ENCODE measurements at regions of chr3 and their contacts with region 1.

Region 1: DNA sequence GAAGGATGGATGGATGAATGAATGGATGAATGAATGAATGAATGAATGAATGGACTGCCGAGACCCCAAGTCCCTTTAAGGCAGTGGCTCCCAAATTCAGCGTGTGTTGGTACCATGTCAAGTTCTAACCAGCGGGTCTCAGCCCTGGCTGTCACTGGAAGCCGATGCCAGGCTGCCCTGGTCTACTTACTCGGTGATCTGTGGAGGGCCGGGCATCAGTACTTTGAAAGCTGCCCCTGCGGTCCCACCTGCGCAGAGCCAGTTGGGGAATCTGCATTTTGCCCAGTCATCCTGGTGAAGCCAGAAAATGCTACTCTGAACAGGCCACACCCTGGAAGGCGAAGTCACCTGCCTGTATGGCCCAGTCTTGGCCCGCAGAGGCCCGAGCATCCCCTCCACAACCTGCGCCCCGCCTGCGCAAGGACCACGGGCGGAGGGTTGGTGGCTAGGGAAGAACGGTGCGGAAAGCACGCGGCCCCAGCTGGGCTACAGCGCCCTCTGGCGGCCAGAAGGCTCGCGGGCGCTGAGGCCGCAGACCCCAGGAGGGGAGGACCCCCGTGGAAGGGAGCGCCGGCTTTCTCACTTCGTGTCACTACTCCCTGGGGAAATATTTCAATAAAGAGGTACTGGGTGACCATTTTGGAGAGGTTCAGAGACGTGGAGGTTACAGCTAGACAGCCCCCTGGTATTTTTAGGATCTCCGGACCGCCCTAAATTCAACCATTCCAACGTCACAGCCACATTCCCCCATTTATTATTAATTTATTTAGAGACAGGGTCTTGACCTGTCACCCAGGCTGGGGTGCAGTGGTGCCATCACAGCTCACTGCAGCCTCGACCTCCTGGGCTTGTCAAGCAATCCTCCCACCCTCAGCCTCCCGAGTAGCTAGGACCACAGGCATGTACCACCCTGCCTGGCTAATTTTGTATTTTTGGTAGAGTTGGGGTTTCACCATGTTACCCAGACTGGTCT is 34.9 kb downstream of the PRKCD start:
- DNase-seq: peak; percentile 50
- H3K4me3 Mint-ChIP-seq: no peak overlapping the region
- H3K27ac Mint-ChIP-seq: no peak overlapping the region
- H3K4me1 Mint-ChIP-seq: no peaks in the 10 kb centered on the region
- H3K27me3 Mint-ChIP-seq: no peaks in the 10 kb centered on the region
- CTCF ChIP-seq: peak; percentile 99

Region 2: DNA sequence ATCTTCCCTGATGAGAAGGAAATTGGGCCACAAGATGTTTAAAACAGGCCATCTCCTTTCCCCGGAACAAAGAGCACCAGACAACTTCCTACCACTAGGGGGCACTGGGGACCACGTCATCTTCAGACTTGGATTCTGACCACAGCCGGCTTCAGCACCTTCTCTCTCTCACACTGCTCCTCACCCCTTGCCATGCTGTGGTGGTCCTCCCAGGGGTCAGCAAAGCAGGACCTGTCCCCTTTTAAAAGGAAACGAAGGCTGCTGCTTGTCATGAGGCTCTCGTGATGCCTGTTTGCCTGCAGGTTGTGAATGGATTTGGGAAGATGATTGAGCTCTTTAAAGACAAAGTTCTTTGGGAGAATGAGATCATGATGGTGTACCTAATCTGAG is 81.9 kb before region 1 on chr3:
- CTCF ChIA-PET with region 1: interaction called, 134 read pairs
- POLR2A ChIA-PET with region 1: interaction called, 12 read pairs
- intact Hi-C with region 1: loop called (anchors 1 kb)
- DNase-seq: peak; percentile 82
- H3K4me3 Mint-ChIP-seq: no peak overlapping the region
- H3K27ac Mint-ChIP-seq: no peak overlapping the region
- H3K4me1 Mint-ChIP-seq: peaks cover 15% of the 10 kb centered on the region
- H3K27me3 Mint-ChIP-seq: no peaks in the 10 kb centered on the region
- CTCF ChIP-seq: peak; percentile 85

Region 3: GRCh38 chr3:53130179-53131061 is 65.5 kb before region 1 on chr3 and contains the start of gene RFT1:
- CTCF ChIA-PET with region 1: interaction called, 220 read pairs
- POLR2A ChIA-PET with region 1: interaction called, 3 read pairs
- intact Hi-C with region 1: loop called (anchors 1 kb)
- DNase-seq: peak; percentile 98
- H3K4me3 Mint-ChIP-seq: peak within 1 kb of the TSS; percentile 92
- H3K27ac Mint-ChIP-seq: peak within 1 kb of the TSS; percentile 97
- H3K4me1 Mint-ChIP-seq: peaks cover 8% of the 10 kb centered on the region
- H3K27me3 Mint-ChIP-seq: no peaks in the 10 kb centered on the region
- CTCF ChIP-seq: no peak
- total RNA-seq, gene RFT1: 40.1 and 42.7 TPM in 2 replicates

Region 4: DNA sequence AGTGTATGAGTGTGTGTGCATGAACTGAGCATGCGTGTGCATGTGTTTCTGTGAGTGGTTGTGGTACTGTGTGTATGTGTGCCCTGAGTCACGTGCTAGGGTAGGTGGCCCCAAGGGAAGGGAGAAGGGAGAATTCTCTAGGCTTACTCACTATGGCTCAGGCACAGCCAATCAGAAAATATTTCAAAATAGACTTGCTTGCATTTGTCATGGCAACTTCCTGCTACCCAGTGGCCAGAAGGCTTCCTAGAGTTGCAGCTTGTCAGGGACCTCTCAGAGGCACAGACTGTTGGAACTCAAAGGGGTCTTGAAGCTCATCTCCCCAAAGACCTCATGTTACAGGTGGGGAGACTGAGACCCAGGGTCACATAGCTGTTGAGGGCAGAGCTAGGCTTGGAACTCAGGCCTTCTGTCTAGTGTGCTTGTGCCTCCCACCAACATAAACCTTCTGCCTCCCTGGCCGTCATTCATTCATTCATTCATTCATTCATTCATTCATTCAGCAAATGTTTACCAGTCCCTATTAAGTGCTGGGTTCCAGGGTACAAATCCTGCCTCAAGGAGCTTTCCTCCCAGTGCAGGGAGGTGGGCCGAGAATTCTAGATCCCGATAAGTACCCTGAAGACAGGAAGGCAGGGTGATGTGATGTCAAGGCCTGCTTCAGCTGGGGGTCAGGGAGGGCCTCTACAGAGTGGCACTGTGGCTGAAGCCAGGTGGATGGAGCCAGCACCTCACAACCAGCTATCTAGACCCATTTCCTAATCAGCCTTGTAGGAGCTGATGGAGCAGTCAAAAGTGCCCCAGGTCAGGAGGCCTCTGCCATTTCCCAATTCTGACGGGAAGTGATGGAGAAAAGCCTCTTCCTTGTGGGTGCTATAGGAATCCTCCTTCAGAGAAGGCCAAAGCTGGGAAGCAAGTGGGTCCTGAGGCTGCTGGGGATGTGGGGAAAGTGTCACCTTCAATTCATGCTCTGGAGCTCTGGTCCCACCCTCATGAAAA is 54.7 kb before region 1 on chr3:
- CTCF ChIA-PET with region 1: interaction called, 220 read pairs
- POLR2A ChIA-PET with region 1: no interaction called
- intact Hi-C with region 1: no loop called
- DNase-seq: peak; percentile 56
- H3K4me3 Mint-ChIP-seq: no peak overlapping the region
- H3K27ac Mint-ChIP-seq: no peak overlapping the region
- H3K4me1 Mint-ChIP-seq: peaks cover 7% of the 10 kb centered on the region
- H3K27me3 Mint-ChIP-seq: no peaks in the 10 kb centered on the region
- CTCF ChIP-seq: no peak

Region 5: DNA sequence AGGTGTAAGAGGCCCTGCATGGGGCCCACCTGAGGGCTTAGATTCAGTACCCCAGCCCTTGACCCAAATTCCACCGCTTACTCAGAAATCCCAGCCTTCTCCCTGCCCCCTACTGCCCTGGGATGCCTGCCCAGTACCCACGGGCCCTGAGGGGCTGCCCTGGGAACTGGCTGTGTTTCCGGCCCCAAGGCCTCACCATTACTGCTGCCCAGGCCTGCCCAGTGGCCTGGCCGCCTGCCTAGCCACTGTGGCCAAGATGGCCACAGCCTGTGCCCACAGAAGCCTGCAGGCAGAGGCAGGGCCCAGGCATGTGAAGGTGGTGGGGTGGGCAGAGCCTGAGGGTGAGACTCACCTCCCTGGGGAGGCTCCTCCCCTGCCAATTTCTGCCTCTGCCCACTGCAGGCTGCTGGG is 41.0 kb before region 1 on chr3:
- CTCF ChIA-PET with region 1: interaction called, 15 read pairs
- POLR2A ChIA-PET with region 1: no interaction called
- intact Hi-C with region 1: no loop called
- DNase-seq: peak; percentile 56
- H3K4me3 Mint-ChIP-seq: no peak overlapping the region
- H3K27ac Mint-ChIP-seq: no peak overlapping the region
- H3K4me1 Mint-ChIP-seq: peaks cover 21% of the 10 kb centered on the region
- H3K27me3 Mint-ChIP-seq: no peaks in the 10 kb centered on the region
- CTCF ChIP-seq: no peak

Region 6: GRCh38 chr3:53160660-53161449 is 35.0 kb before region 1 on chr3 and contains the start of gene PRKCD:
- CTCF ChIA-PET with region 1: interaction called, 15 read pairs
- POLR2A ChIA-PET with region 1: no interaction called
- intact Hi-C with region 1: no loop called
- DNase-seq: peak; percentile 90
- H3K4me3 Mint-ChIP-seq: peak within 1 kb of the TSS; percentile 89
- H3K27ac Mint-ChIP-seq: peak within 1 kb of the TSS; percentile 71
- H3K4me1 Mint-ChIP-seq: peaks cover 20% of the 10 kb centered on the region
- H3K27me3 Mint-ChIP-seq: no peaks in the 10 kb centered on the region
- CTCF ChIP-seq: peak; percentile 27
- total RNA-seq, gene PRKCD: 9.6 and 9.8 TPM in 2 replicates

Region 7: GRCh38 chr3:53170325-53171063 is 25.4 kb before region 1 on chr3:
- CTCF ChIA-PET with region 1: interaction called, 19 read pairs
- POLR2A ChIA-PET with region 1: no interaction called
- intact Hi-C with region 1: no loop called
- DNase-seq: no peak
- H3K4me3 Mint-ChIP-seq: no peak overlapping the region
- H3K27ac Mint-ChIP-seq: no peak overlapping the region
- H3K4me1 Mint-ChIP-seq: peaks cover 6% of the 10 kb centered on the region
- H3K27me3 Mint-ChIP-seq: no peaks in the 10 kb centered on the region
- CTCF ChIP-seq: no peak